Activated CD4-positive, alpha-beta T cell treated with anti-CD3 and anti-CD28 coated beads for 36 hours (primary cell): ENCODE measurements at regions of chr10 and their contacts with region 1.

Region 1: DNA sequence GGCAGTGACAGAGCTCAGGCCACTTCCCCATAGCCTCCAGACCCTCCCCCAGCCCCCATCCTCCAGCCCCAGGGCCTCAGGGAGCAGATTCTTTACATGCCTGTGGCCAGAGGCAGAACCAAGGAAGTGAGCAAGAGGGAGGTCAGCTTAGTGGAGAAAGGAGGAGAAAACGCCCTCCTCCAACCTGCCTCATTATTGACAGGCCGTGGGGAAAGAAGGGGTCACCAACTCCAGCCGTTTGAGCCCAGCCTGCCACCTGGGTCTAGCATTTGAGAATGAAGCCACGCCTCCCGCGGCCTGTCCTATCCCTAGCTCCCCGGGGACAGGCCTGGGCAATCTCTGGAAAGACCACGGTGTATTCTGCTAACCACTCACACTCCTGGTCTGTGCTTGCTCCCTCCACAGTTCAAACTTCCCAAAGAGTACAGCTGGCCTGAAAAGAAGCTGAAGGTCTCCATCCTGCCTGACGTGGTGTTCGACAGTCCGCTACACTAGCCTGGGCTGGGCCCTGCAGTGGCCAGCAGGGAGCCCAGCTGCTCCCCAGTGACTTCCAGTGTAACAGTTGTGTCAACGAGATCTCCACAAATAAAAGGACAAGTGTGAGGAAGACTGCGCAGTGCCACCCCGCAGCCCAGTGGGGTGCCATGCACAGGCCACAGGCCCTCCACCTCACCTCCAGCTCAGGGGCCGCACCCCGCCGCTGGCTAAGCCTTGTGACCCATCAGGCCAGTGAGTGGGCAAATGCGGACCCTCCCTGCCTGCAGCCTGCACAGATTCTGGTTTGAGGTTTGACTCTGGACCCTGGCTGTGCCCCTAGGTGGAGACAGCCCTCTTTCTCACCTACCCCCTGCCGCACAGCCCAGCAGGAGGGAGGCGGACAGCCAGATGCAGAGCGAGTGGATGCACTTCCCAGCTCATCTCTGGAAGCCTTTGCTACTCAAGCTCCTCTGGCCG is 14.3 kb upstream of the TRIM8 start:
- DNase-seq: no peak
- ATAC-seq: no peak
- H3K4me3 Mint-ChIP-seq: no peak overlapping the region
- H3K27ac Mint-ChIP-seq: no peak overlapping the region
- H3K4me1 Mint-ChIP-seq: peaks cover 37% of the 10 kb centered on the region
- H3K27me3 Mint-ChIP-seq: no peaks in the 10 kb centered on the region

Region 2: GRCh38 chr10:102616066-102616770 is 13.7 kb before region 1 on chr10:
- CTCF ChIA-PET with region 1: interaction called, 6 read pairs
- POLR2A ChIA-PET with region 1: interaction called, 6 read pairs
- intact Hi-C with region 1: loop called in 1 of 2 experiments (anchors 2 kb)
- DNase-seq: no peak
- ATAC-seq: no peak
- H3K4me3 Mint-ChIP-seq: no peak overlapping the region
- H3K27ac Mint-ChIP-seq: no peak overlapping the region
- H3K4me1 Mint-ChIP-seq: peaks cover 21% of the 10 kb centered on the region
- H3K27me3 Mint-ChIP-seq: no peaks in the 10 kb centered on the region

Region 3: GRCh38 chr10:102701272-102701671 is 71.3 kb after region 1 on chr10:
- CTCF ChIA-PET with region 1: no interaction called
- POLR2A ChIA-PET with region 1: no interaction called
- intact Hi-C with region 1: no loop called
- DNase-seq: no peak
- ATAC-seq: no peak
- H3K4me3 Mint-ChIP-seq: no peak overlapping the region
- H3K27ac Mint-ChIP-seq: no peak overlapping the region
- H3K4me1 Mint-ChIP-seq: peaks cover 11% of the 10 kb centered on the region
- H3K27me3 Mint-ChIP-seq: no peaks in the 10 kb centered on the region